PC-3 (cell line): ENCODE measurements at regions of chr21 and their contacts with region 1.

Region 1: GRCh38 chr21:21688875-21689274 is 690.7 kb downstream of the NCAM2 start:
- DNase-seq: peak; percentile 46
- ATAC-seq: peak; percentile 75
- H3K4me3 ChIP-seq: no peak overlapping the region
- H3K27ac ChIP-seq: no peak overlapping the region
- H3K4me1 ChIP-seq: no peaks in the 10 kb centered on the region
- H3K27me3 ChIP-seq: no peaks in the 10 kb centered on the region
- CTCF ChIP-seq: peak; percentile 67

Region 2: GRCh38 chr21:21163904-21164303 is 525.0 kb before region 1 on chr21:
- CTCF ChIA-PET with region 1: no interaction called
- POLR2A ChIA-PET with region 1: no interaction called
- intact Hi-C with region 1: loop called (anchors 1 kb)
- DNase-seq: peak; percentile 72
- ATAC-seq: peak; percentile 66
- H3K4me3 ChIP-seq: no peak overlapping the region
- H3K27ac ChIP-seq: no peak overlapping the region
- H3K4me1 ChIP-seq: no peaks in the 10 kb centered on the region
- H3K27me3 ChIP-seq: no peaks in the 10 kb centered on the region
- CTCF ChIP-seq: peak; percentile 76

Region 3: GRCh38 chr21:21232320-21232719 is 456.6 kb before region 1 on chr21:
- CTCF ChIA-PET with region 1: no interaction called
- POLR2A ChIA-PET with region 1: no interaction called
- intact Hi-C with region 1: loop called (anchors 1 kb)
- DNase-seq: peak; percentile 17
- ATAC-seq: no peak
- H3K4me3 ChIP-seq: no peak overlapping the region
- H3K27ac ChIP-seq: no peak overlapping the region
- H3K4me1 ChIP-seq: no peaks in the 10 kb centered on the region
- H3K27me3 ChIP-seq: no peaks in the 10 kb centered on the region
- CTCF ChIP-seq: peak; percentile 58

Region 4: DNA sequence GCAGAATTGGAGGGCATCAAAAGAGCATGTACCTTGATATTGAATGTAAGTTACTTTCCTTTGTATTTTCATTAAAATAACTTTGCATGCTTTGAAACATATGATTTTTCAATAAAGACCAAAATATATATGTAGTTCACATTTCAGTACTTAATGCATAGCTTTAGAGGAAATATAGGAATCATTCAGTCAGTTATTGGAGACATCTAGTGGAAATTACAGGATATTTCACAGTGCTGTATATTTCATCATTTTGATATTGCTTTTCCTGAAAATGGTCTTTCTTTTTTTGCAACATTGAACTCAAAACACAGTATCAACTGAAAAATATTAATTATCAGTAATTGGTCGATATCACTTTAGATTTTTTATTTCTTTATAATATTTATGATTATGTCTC is 314.9 kb before region 1 on chr21:
- CTCF ChIA-PET with region 1: no interaction called
- POLR2A ChIA-PET with region 1: no interaction called
- intact Hi-C with region 1: loop called (anchors 10 kb)
- DNase-seq: no peak
- ATAC-seq: peak; percentile 43; the same call in 1 of the 2 replicates
- H3K4me3 ChIP-seq: no peak overlapping the region
- H3K27ac ChIP-seq: no peak overlapping the region
- H3K4me1 ChIP-seq: no peaks in the 10 kb centered on the region
- H3K27me3 ChIP-seq: no peaks in the 10 kb centered on the region
- CTCF ChIP-seq: peak; percentile 46; the same call in 1 of the 2 replicates

Region 5: GRCh38 chr21:21436012-21436540 is 252.8 kb before region 1 on chr21:
- CTCF ChIA-PET with region 1: no interaction called
- POLR2A ChIA-PET with region 1: no interaction called
- intact Hi-C with region 1: loop called (anchors 10 kb)
- DNase-seq: peak; percentile 3
- ATAC-seq: peak; percentile 49
- H3K4me3 ChIP-seq: no peak overlapping the region
- H3K27ac ChIP-seq: no peak overlapping the region
- H3K4me1 ChIP-seq: no peaks in the 10 kb centered on the region
- H3K27me3 ChIP-seq: no peaks in the 10 kb centered on the region
- CTCF ChIP-seq: no peak

Region 6: DNA sequence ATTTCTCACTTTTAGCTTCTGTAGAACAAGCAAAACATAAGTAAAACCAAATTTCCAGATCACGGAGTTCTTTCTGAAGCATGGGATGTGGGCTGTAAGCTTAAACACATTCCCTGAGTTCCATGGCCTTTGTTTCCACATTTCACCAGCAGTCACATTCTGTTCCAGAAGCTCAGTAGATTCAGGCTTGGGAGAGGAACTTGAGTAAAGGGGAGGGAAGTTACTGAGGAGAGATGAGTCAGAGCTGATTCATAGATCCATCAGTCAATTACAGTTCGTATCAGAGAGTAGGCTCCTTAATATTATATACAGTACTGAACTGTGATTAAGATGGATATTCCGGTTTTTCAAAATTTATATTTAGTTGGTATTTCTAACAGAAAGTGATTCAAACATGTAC is 76.4 kb before region 1 on chr21:
- CTCF ChIA-PET with region 1: no interaction called
- POLR2A ChIA-PET with region 1: no interaction called
- intact Hi-C with region 1: no loop called
- DNase-seq: peak; percentile 79
- ATAC-seq: peak; percentile 98
- H3K4me3 ChIP-seq: no peak overlapping the region
- H3K27ac ChIP-seq: no peak overlapping the region
- H3K4me1 ChIP-seq: no peaks in the 10 kb centered on the region; the same call in 1 of the 2 replicates
- H3K27me3 ChIP-seq: no peaks in the 10 kb centered on the region
- CTCF ChIP-seq: no peak

Region 7: GRCh38 chr21:21921421-21922232 is 232.8 kb after region 1 on chr21:
- CTCF ChIA-PET with region 1: no interaction called
- POLR2A ChIA-PET with region 1: interaction called, 3 read pairs
- intact Hi-C with region 1: loop called (anchors 5 kb)
- DNase-seq: peak; percentile 65
- ATAC-seq: peak; percentile 64
- H3K4me3 ChIP-seq: peak overlapping the region; percentile 33
- H3K27ac ChIP-seq: no peak overlapping the region
- H3K4me1 ChIP-seq: no peaks in the 10 kb centered on the region
- H3K27me3 ChIP-seq: no peaks in the 10 kb centered on the region
- CTCF ChIP-seq: peak; percentile 88

Region 8: DNA sequence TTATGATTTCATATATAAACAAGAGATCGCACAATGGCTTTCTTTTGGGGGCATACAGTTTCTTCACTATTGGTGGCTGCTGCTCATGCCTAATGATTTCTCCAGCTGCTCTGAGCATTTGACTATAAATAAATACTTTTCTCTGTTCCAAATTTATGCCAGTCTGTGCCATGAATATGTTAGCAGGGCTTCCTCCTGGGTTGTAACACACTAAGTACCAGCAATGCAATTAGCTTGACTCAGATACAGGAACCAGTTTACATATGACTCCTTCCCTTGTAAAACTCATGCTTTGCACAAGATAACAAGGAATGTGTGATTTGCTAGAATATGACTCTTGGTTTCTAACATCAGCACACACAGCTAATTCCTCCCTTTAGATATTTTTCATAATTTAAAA is 939.0 kb after region 1 on chr21:
- CTCF ChIA-PET with region 1: no interaction called
- POLR2A ChIA-PET with region 1: no interaction called
- intact Hi-C with region 1: no loop called
- DNase-seq: no peak
- ATAC-seq: peak; percentile 33; the same call in 1 of the 2 replicates
- H3K4me3 ChIP-seq: no peak overlapping the region
- H3K27ac ChIP-seq: no peak overlapping the region
- H3K4me1 ChIP-seq: no peaks in the 10 kb centered on the region
- H3K27me3 ChIP-seq: no peaks in the 10 kb centered on the region
- CTCF ChIP-seq: no peak